Gastrocnemius medialis (tissue), 4 donors: ENCODE measurements at regions of chr11 and their contacts with region 1.

Region 1: DNA sequence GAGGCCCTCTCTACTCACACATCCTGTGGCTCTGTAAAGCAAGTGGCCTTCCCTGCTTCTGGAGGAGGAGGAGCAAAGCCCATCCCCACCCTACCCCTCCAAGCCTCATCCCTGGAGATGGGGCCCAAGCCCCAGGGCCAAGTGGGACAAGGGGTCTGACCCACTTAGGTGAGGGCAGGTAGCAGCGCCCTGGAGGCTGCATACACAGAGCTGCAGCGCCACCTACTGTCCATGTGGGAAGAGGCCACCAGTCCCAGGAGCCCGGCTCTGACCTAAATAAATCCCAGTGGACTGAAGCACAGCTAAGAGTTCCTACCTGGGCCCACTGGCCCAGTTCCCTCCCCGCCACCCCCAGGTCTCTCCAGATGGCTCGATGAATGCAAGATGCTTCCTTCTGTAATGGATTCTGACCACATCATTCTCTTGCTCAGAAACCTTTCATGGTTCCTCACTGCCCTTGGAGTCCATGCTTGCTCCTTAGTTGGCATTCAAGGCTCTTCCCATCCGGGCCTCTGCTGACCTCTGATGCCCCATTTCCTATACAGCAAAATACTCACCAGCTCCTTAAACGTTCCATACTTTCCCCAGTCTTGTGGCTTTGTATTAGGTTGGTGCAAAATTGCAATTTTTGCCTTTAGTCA is 62.1 kb downstream of the THAP12 start:
- DNase-seq: peak; percentile 63 to 69
- ATAC-seq: peak; percentile 90 to 93
- H3K4me3 ChIP-seq: no peak overlapping the region
- H3K27ac ChIP-seq: no peak overlapping the region
- H3K4me1 ChIP-seq: no peaks in the 10 kb centered on the region
- H3K27me3 ChIP-seq: peaks cover 5 to 9% (median 8%) of the 10 kb centered on the region in 3 donors
- CTCF ChIP-seq: peak; percentile 89 to 95 (median 94)
- POLR2A ChIP-seq: no peak

Region 2: DNA sequence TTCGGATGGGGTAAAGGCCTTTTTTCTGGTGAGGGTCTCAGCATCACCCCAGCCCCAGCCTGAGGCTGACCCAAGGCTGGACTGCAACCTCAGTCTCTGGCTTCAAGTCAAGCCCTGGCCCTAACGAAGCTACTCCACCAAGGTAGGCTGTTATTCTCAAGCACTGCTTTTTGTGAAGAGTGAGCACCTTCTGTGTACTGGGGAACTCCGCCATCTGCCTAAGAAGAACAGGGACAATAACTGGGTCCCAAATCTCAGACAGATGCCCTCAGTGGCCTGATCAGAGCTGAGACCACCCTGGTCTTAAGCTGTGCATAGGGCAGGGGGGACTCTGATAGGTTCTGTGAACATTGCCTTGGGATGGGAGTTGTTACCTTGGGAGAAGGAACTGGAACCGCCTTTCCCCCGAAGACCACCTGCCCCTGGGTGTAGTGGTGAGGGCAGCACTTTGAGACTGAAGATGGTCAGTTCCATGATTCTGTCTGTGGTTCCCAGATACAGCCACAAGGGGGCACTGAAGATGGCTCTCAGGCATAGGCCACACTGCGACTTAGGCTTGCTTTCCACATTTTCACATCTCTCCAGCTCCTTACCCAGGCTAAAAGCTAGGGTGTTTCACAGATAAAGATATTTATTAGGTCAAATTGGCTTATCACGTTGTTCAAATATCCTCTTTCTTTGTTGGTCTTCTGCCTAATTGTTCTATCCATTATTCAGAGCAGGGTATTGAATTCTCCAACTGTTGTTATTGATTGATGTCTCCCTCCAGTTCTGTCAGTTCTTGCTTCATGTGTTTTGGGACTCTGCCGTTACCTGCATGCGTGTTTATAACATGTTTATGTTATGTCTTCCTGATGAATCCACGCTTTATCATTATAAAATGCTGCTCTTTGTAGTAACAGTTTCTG is 515.7 kb before region 1 on chr11:
- in situ Hi-C with region 1: no loop called
- intact Hi-C with region 1: loop called (anchors 1 kb)
- DNase-seq: peak; percentile 52 to 66
- ATAC-seq: peak; percentile 91 to 95
- H3K4me3 ChIP-seq: no peak overlapping the region
- H3K27ac ChIP-seq: no peak overlapping the region
- H3K4me1 ChIP-seq: no peaks in the 10 kb centered on the region
- H3K27me3 ChIP-seq: no peaks in the 10 kb centered on the region
- CTCF ChIP-seq: peak; percentile 76 to 93 (median 89)
- POLR2A ChIP-seq: no peak

Region 3: DNA sequence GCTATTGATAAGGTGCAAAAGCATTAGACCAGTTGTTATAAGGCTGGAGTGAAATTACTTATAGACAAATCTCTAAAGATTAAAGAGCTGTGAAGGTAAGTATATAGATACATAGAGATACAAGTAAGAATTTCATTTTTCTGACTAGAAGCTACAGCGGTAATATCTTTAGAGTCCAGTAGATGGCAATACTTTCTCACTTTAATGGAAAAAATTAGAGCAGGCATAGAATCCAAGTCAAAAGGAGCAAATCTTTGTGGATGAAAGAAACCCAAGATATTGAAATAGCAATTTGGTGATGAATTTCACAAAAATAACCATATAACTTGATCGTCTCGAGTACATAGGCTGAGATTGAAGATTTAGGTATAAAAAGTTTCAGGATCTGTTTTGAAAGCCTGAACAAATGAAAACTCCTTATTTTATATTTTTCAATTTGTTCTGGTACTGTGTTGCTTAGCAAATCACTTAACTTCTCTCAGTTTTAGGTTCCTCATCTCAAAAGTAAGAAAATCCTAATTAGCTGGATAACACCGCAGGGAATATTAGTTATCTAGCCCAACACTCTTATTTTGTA is 421.9 kb before region 1 on chr11:
- in situ Hi-C with region 1: loop called in 3 of 4 experiments (anchors 5 to 10 kb)
- intact Hi-C with region 1: loop called (anchors 5 kb)
- DNase-seq: no peak
- ATAC-seq: peak in 1 of 2 donors; percentile 46
- H3K4me3 ChIP-seq: no peak overlapping the region
- H3K27ac ChIP-seq: no peak overlapping the region
- H3K4me1 ChIP-seq: peaks cover 13 to 21% of the 10 kb centered on the region in 2 donors
- H3K27me3 ChIP-seq: no peaks in the 10 kb centered on the region
- CTCF ChIP-seq: peak; percentile 61 to 74 (median 63)
- POLR2A ChIP-seq: no peak

Region 4: DNA sequence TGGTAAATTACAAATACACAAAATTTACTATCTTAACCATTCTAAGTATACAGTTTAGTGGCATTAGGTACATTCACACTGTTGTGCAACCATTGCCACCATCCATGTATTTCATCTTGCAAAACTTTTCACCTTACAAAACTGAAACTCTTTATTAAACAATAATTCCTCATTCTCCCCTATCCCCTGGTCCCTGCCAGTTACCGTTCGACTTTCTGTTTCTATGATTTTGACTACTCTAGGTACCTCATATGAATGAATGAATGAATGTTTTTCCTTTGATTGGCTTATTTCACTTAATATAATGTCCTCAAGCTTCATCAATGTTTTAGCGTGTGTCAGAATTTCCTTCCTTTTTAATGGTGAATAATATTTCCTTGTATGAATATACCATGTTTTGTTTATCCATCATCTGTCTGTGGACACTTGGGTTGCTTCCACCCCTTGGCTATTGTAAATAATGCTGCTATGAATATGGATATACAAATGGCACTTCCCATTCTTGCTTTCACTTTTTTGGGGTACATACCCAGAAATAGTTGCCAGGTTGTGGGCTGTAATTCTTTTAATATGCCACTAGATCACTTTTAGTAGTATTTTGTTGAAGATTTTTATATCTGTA is 410.8 kb before region 1 on chr11:
- in situ Hi-C with region 1: loop called in 1 of 4 experiments (anchors 10 kb)
- intact Hi-C with region 1: no loop called
- DNase-seq: no peak
- ATAC-seq: no peak
- H3K4me3 ChIP-seq: no peak overlapping the region
- H3K27ac ChIP-seq: no peak overlapping the region
- H3K4me1 ChIP-seq: peaks cover 15 to 19% of the 10 kb centered on the region in 2 donors
- H3K27me3 ChIP-seq: no peaks in the 10 kb centered on the region
- CTCF ChIP-seq: no peak
- POLR2A ChIP-seq: no peak